Common myeloid progenitor, CD34-positive (primary cell): ENCODE measurements at regions of chr7 and their contacts with region 1.

Region 1: DNA sequence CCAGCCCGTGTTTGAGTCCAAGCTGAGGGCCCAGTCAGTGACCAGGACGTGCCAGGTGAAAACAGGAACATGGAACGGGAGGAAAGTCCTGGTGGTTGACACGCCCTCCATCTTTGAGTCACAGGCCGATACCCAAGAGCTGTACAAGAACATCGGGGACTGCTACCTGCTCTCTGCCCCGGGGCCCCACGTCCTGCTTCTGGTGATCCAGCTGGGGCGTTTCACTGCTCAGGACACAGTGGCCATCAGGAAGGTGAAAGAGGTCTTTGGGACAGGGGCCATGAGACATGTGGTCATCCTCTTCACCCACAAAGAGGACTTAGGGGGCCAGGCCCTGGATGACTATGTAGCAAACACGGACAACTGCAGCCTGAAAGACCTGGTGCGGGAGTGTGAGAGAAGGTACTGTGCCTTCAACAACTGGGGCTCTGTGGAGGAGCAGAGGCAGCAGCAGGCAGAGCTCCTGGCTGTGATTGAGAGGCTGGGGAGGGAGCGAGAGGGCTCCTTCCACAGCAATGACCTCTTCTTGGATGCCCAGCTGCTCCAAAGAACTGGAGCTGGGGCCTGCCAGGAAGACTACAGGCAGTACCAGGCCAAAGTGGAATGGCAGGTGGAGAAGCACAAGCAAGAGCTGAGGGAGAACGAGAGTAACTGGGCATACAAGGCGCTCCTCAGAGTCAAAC is 5.2 kb downstream of the GIMAP5 start:
- DNase-seq: no peak
- H3K4me3 ChIP-seq: no peak overlapping the region
- H3K27ac ChIP-seq: no peak overlapping the region
- H3K4me1 ChIP-seq: peaks cover 6 to 27% (median 18%) of the 10 kb centered on the region in 4 experiments
- H3K27me3 ChIP-seq: no peaks in the 10 kb centered on the region

Region 2: GRCh38 chr7:150753826-150754603 is 11.6 kb after region 1 on chr7:
- CTCF ChIA-PET with region 1: interaction called, 10 read pairs
- POLR2A ChIA-PET with region 1: interaction called, 3 read pairs
- DNase-seq: peak; percentile 62 to 87 (median 83)
- H3K4me3 ChIP-seq: no peak overlapping the region
- H3K27ac ChIP-seq: peak overlapping the region in 1 of 2 experiments; percentile 49
- H3K4me1 ChIP-seq: peaks cover 0 to 45% (median 32%) of the 10 kb centered on the region in 4 experiments
- H3K27me3 ChIP-seq: no peaks in the 10 kb centered on the region